Naive thymus-derived CD8-positive, alpha-beta T cell (primary cell): ENCODE measurements at regions of chr17 and their contacts with region 1.

Region 1: DNA sequence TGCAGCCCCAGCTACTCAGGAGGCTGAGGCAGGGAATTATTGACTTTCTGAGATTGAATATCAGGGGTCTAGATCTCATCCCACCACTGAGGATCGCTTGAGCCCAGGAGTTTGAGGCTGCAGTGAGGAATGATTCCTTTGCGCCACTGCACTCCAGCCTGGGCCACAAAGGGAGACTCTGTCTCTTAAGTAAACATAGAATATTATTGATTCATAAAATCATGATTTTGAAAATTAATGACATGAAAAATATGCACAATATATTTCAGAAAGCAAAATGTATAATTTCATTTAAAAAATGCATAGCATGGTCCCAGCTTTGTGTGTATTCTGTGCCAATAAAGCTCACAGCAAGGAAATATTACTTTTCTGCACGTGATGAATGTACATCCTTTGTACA is 1.6 kb upstream of the VPS53 start:
- DNase-seq: no peak
- ATAC-seq: no peak
- H3K4me3 Mint-ChIP-seq: peak overlapping the region in 9 of 10 donors; percentile 26 to 100 (median 56)
- H3K27ac Mint-ChIP-seq: peak overlapping the region in 2 of 10 donors; percentile 11 to 34
- H3K4me1 Mint-ChIP-seq: peaks cover 9 to 36% (median 23%) of the 10 kb centered on the region in 4 donors
- H3K27me3 Mint-ChIP-seq: no peaks in the 10 kb centered on the region

Region 2: DNA sequence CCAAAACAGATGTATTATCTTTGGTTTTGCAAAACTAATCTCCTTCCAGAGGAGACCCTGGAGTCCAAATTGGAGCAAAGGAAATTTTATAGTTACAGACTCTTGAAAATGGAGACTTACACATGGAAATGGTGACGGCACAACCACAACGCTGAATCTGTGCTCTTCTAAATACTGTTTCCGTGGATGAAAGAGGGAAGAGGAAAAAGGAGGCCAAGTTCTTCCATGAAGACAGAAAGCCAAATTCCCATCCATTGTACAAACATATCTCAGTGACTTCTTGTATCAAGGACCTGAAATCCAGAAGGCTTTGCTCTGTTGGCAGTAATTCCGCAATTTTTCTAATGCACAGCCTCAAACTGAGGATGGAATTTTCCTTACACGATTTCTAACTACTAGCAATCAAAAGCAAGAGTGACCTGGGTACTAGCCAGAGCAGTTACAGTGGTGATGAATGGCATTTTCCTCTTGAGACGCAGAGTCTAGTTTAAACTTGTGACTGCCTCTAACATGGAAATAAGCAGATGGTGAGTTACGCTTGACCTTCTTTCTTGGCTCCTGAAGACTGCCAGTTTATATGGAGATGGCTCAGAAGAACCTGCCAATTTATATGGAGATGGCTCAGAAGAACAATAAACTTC is 40.1 kb before region 1 on chr17:
- POLR2A ChIA-PET with region 1: no interaction called
- DNase-seq: no peak
- ATAC-seq: no peak
- H3K4me3 Mint-ChIP-seq: no peak overlapping the region
- H3K27ac Mint-ChIP-seq: no peak overlapping the region
- H3K4me1 Mint-ChIP-seq: peaks cover 3 to 14% (median 4%) of the 10 kb centered on the region in 4 donors
- H3K27me3 Mint-ChIP-seq: no peaks in the 10 kb centered on the region

Region 3: GRCh38 chr17:752002-752619 is 35.9 kb after region 1 on chr17 and contains the start of gene GEMIN4:
- POLR2A ChIA-PET with region 1: interaction called, 27 read pairs
- DNase-seq: peak; percentile 92 to 100 (median 98)
- ATAC-seq: peak; percentile 83 to 84
- H3K4me3 Mint-ChIP-seq: peak within 1 kb of the TSS; percentile 92 to 98 (median 96)
- H3K27ac Mint-ChIP-seq: peak within 1 kb of the TSS; percentile 93 to 98 (median 97)
- H3K4me1 Mint-ChIP-seq: peaks cover 33 to 45% (median 37%) of the 10 kb centered on the region in 4 donors
- H3K27me3 Mint-ChIP-seq: no peaks in the 10 kb centered on the region
- polyA plus RNA-seq, gene GEMIN4: 16.6 to 35.1 (median 21.2) TPM

Region 4: DNA sequence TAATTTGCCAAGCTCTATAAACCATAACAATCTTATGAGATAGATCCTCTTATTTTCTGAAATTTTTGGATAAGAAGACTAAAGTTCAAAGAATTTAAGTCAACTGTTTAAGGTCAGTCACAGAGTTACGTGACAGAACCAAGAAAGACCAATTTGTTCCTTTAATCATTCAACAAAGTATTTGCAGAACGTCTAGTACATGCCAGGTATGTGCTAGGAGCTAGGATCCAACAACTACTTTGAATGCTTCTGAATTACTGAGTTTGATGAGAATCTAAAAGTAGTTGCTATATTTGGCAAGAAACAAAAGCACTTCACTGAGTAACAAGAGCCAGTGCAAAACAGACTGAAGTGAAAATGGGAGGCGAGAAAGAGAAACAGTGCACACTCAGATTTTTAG is 50.8 kb after region 1 on chr17:
- POLR2A ChIA-PET with region 1: no interaction called
- DNase-seq: no peak
- ATAC-seq: no peak
- H3K4me3 Mint-ChIP-seq: no peak overlapping the region
- H3K27ac Mint-ChIP-seq: no peak overlapping the region
- H3K4me1 Mint-ChIP-seq: peaks cover 0 to 10% (median 0%) of the 10 kb centered on the region in 4 donors
- H3K27me3 Mint-ChIP-seq: no peaks in the 10 kb centered on the region